ENCODE measurements at regions of chr9 and their contacts with region 1.

Region 1: DNA sequence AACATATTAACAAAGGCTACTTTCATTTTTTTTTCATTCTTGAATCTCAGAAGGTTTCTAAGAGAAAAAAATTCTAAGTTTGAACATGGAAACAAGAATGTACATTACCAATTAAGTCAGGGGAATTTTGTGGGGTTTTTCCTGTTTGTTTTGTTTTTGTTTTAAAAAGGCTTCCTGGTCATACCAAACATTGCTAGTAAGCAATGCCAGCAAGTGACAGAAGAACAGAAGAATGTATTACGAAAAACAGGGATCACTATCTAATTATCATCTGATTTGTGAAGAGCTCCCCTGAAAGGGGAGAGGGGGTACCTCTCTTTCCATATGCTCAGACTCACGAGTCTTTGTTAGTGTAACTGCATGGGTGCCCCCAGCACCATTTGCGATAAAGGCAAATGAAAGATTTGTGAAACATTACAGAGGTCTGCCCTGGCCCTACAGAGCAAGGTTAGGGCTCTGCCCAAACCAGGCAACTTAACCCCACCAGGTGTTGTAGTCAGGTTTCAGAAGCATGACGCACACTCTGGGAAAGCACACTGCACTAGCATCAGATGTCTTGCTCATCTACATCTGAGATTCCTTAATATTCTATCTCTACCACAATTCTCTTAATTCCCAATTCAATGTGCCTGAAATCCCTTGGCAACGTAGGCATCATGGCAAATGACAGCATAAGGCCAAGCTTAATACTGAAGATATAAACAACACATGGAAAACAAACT is 268.2 kb downstream of the MLLT3 start:
- DNase-seq: no peak
- H3K4me3 ChIP-seq: no peak overlapping the region
- H3K27ac ChIP-seq: no peak overlapping the region
- H3K4me1 ChIP-seq: no peaks in the 10 kb centered on the region
- H3K27me3 ChIP-seq: no peaks in the 10 kb centered on the region
- CTCF ChIP-seq: no peak
- POLR2A ChIP-seq: no peak

Region 2: GRCh38 chr9:18829873-18830272 is 1524.2 kb before region 1 on chr9:
- intact Hi-C with region 1: loop called (anchors 5 kb)
- DNase-seq: no peak
- H3K4me3 ChIP-seq: no peak overlapping the region
- H3K27ac ChIP-seq: no peak overlapping the region
- H3K4me1 ChIP-seq: no peaks in the 10 kb centered on the region
- H3K27me3 ChIP-seq: no peaks in the 10 kb centered on the region
- CTCF ChIP-seq: no peak
- POLR2A ChIP-seq: no peak

Region 3: GRCh38 chr9:20622330-20623020 is 268.4 kb after region 1 on chr9 and contains the start of gene MLLT3:
- intact Hi-C with region 1: loop called (anchors 5 kb)
- DNase-seq: peak; percentile 87 to 93
- H3K4me3 ChIP-seq: peak within 1 kb of the TSS; percentile 69 to 93 (median 79)
- H3K27ac ChIP-seq: peak within 1 kb of the TSS; percentile 75 to 85
- H3K4me1 ChIP-seq: peaks cover 0 to 5% of the 10 kb centered on the region in 2 donors
- H3K27me3 ChIP-seq: no peaks in the 10 kb centered on the region
- CTCF ChIP-seq: peak in 1 of 3 donors; percentile 2
- POLR2A ChIP-seq: no peak
- total RNA-seq, gene MLLT3: 8.8 to 30.3 (median 22.6) TPM

Region 4: GRCh38 chr9:20823051-20823450 is 469.0 kb after region 1 on chr9:
- intact Hi-C with region 1: no loop called
- DNase-seq: no peak
- H3K4me3 ChIP-seq: no peak overlapping the region
- H3K27ac ChIP-seq: no peak overlapping the region
- H3K4me1 ChIP-seq: no peaks in the 10 kb centered on the region
- H3K27me3 ChIP-seq: no peaks in the 10 kb centered on the region
- CTCF ChIP-seq: no peak
- POLR2A ChIP-seq: no peak

Measured in breast epithelium (tissue), 4 donors.